RWPE1 (cell line): ENCODE measurements at regions of chr5 and their contacts with region 1.

Region 1: GRCh38 chr5:53568871-53569270 is 8.4 kb downstream of the NDUFS4 start:
- DNase-seq: no peak
- H3K27ac ChIP-seq: no peak overlapping the region
- CTCF ChIP-seq: no peak

Region 2: GRCh38 chr5:53362521-53362941 is 206.3 kb before region 1 on chr5:
- CTCF ChIA-PET with region 1: no interaction called
- POLR2A ChIA-PET with region 1: no interaction called
- DNase-seq: peak; percentile 96
- H3K27ac ChIP-seq: peak overlapping the region; percentile 96; the same call in 1 of the 2 replicates
- CTCF ChIP-seq: no peak

Region 3: DNA sequence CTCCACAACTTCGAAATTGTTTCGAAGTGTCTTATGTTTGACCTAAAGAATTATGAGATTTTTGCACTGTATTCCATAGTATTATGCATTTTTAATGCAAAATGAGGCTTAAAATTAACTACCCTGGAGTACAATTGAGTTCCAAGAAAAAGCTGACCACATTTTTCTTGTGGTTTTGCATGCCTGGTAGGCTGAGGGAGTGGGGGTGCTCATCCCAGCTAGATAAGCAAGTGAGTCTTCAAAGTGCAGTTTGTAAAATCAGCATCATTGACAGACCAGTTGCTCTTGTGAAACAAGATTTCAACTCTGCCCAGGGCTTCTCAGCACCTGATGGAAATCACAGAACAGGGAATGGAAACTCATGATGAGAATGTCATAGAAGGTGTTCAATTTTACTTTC is 25.5 kb before region 1 on chr5:
- CTCF ChIA-PET with region 1: interaction called, 13 read pairs
- POLR2A ChIA-PET with region 1: no interaction called
- DNase-seq: no peak
- H3K27ac ChIP-seq: no peak overlapping the region
- CTCF ChIP-seq: no peak

Region 4: GRCh38 chr5:53590759-53591158 is 21.9 kb after region 1 on chr5:
- CTCF ChIA-PET with region 1: no interaction called
- POLR2A ChIA-PET with region 1: no interaction called
- DNase-seq: no peak
- H3K27ac ChIP-seq: no peak overlapping the region
- CTCF ChIP-seq: no peak